Sigmoid colon (tissue), 7 donors: ENCODE measurements at regions of chr2 and their contacts with region 1.

Region 1: GRCh38 chr2:98649135-98649991 is 41.0 kb downstream of the UNC50 start:
- DNase-seq: peak; percentile 86
- H3K4me3 ChIP-seq: no peak overlapping the region
- H3K27ac ChIP-seq: no peak overlapping the region
- H3K4me1 ChIP-seq: no peaks in the 10 kb centered on the region
- H3K27me3 ChIP-seq: no peaks in the 10 kb centered on the region
- CTCF ChIP-seq: peak; percentile 92 to 99 (median 98)
- EP300 ChIP-seq: no peak
- POLR2A ChIP-seq: no peak

Region 2: GRCh38 chr2:98828793-98829371 is 179.5 kb after region 1 on chr2:
- intact Hi-C with region 1: no loop called
- DNase-seq: no peak
- H3K4me3 ChIP-seq: no peak overlapping the region
- H3K27ac ChIP-seq: no peak overlapping the region
- H3K4me1 ChIP-seq: no peaks in the 10 kb centered on the region
- H3K27me3 ChIP-seq: no peaks in the 10 kb centered on the region
- CTCF ChIP-seq: no peak
- EP300 ChIP-seq: no peak
- POLR2A ChIP-seq: no peak

Region 3: DNA sequence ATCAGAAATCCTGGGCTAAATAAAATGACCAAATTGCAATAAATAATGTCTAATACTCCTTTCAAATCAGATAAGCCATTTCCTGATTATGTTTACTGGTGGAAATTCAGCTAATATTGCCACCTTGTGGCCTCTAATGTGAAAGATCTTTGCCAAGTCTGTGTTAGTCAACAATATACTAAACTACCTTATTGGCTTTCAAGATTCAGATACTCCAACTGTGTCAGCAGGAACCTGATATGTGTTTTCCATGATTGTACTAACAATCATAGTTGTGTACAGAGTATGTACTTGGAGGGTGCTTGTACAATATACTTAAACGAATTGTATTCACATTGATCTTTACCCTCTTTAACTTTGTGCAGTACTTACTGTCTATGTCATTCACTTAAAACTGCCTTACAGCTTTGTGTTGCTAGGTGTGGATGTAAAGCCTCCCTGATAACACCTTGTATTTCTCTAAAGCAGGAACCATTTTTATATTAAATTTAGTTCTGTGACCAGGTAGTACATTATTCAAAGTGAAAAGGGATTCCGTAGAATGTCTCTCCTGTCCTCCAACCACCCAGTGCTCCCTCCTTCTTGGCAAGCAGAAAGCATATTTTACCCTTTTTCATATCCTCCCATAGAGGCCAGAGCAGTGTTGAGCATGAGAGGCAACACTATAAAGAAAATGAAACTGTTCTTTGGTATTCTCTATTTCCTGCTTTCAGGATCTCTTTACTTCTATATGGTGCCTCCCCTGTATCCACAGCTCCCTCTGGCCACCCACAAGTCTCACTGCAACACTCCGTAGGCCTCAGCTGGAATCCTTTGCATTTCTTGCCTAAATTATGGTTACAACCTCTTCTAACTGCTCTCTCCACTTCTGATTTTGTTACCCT is 417.0 kb after region 1 on chr2:
- intact Hi-C with region 1: loop called (anchors 10 kb)
- DNase-seq: no peak
- H3K4me3 ChIP-seq: no peak overlapping the region
- H3K27ac ChIP-seq: peak overlapping the region in 2 of 4 donors; percentile 21 to 29
- H3K4me1 ChIP-seq: no peaks in the 10 kb centered on the region
- H3K27me3 ChIP-seq: no peaks in the 10 kb centered on the region
- CTCF ChIP-seq: peak in 2 of 4 experiments; percentile 2 to 13
- EP300 ChIP-seq: no peak
- POLR2A ChIP-seq: no peak